GM12878 (cell line): ENCODE measurements at regions of chr9 and their contacts with region 1.

Region 1: GRCh38 chr9:105414947-105415661 is 32.7 kb upstream of the FSD1L start:
- DNase-seq: no peak
- ATAC-seq: peak; percentile 92
- H3K4me3 ChIP-seq: no peak overlapping the region
- H3K27ac ChIP-seq: no peak overlapping the region
- H3K4me1 ChIP-seq: peaks cover 9% of the 10 kb centered on the region
- H3K27me3 ChIP-seq: no peaks in the 10 kb centered on the region
- CTCF ChIP-seq: peak; percentile 79 to 91 (median 87)
- EP300 ChIP-seq: no peak
- POLR2A ChIP-seq: no peak
- RAD21 ChIP-seq: peak; percentile 98

Region 2: DNA sequence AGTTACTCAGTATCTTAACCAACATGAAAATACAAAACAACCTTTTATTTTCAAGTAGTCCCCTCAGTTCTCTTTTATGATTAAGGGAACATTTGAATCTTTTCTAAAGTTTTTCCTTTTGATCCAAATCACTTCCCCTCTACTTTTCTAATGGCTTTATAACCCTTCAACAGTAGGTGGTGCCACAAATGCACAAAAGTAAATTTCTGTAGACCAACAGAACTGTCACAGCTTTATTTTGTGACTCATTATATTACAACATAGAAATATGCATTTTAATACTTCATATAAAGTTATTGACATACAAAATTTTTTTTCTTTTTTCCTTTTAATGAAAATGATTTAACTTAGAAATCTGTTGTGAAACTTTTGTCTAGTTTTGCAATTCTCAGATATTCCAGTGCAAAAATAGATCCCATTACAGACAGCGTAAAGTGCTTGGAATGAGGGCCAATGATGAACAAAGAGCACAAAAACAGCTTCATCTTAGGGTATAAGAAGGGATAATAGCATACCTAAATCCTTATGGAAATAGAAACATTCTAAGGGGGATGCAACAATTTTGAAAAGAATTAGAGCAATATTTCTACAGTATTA is 634.2 kb before region 1 on chr9:
- CTCF ChIA-PET with region 1: interaction called, 7 read pairs
- POLR2A ChIA-PET with region 1: no interaction called
- RAD21 ChIA-PET with region 1: interaction called, 6 read pairs
- SMC1A ChIA-PET with region 1: interaction called, 10 read pairs
- in situ Hi-C with region 1: loop called (anchors 5 kb)
- intact Hi-C with region 1: loop called (anchors 2 kb)
- DNase-seq: no peak
- ATAC-seq: peak; percentile 62
- H3K4me3 ChIP-seq: no peak overlapping the region
- H3K27ac ChIP-seq: no peak overlapping the region
- H3K4me1 ChIP-seq: peaks cover 13% of the 10 kb centered on the region
- H3K27me3 ChIP-seq: no peaks in the 10 kb centered on the region
- CTCF ChIP-seq: peak; percentile 34 to 63 (median 50); a peak in 5 of 6 replicates
- EP300 ChIP-seq: no peak
- POLR2A ChIP-seq: no peak
- RAD21 ChIP-seq: peak; percentile 86

Region 3: GRCh38 chr9:104868687-104869404 is 546.3 kb before region 1 on chr9:
- CTCF ChIA-PET with region 1: interaction called, 66 read pairs
- POLR2A ChIA-PET with region 1: no interaction called
- RAD21 ChIA-PET with region 1: interaction called, 22 read pairs
- SMC1A ChIA-PET with region 1: interaction called, 7 read pairs
- in situ Hi-C with region 1: loop called (anchors 5 kb)
- intact Hi-C with region 1: no loop called
- DNase-seq: no peak
- ATAC-seq: peak; percentile 92
- H3K4me3 ChIP-seq: no peak overlapping the region
- H3K27ac ChIP-seq: no peak overlapping the region
- H3K4me1 ChIP-seq: peaks cover 6% of the 10 kb centered on the region
- H3K27me3 ChIP-seq: no peaks in the 10 kb centered on the region
- CTCF ChIP-seq: no peak
- EP300 ChIP-seq: no peak
- POLR2A ChIP-seq: no peak
- RAD21 ChIP-seq: no peak

Region 4: GRCh38 chr9:105157130-105157583 is 257.9 kb before region 1 on chr9:
- CTCF ChIA-PET with region 1: interaction called, 27 read pairs
- POLR2A ChIA-PET with region 1: no interaction called
- RAD21 ChIA-PET with region 1: interaction called, 10 read pairs
- SMC1A ChIA-PET with region 1: interaction called, 6 read pairs
- in situ Hi-C with region 1: loop called (anchors 5 kb)
- intact Hi-C with region 1: loop called (anchors 1 kb)
- DNase-seq: no peak
- ATAC-seq: peak; percentile 93
- H3K4me3 ChIP-seq: no peak overlapping the region
- H3K27ac ChIP-seq: no peak overlapping the region
- H3K4me1 ChIP-seq: no peaks in the 10 kb centered on the region
- H3K27me3 ChIP-seq: no peaks in the 10 kb centered on the region
- CTCF ChIP-seq: peak; percentile 27 to 54 (median 40); a peak in 4 of 6 replicates
- EP300 ChIP-seq: no peak
- POLR2A ChIP-seq: no peak
- RAD21 ChIP-seq: peak; percentile 63

Region 5: DNA sequence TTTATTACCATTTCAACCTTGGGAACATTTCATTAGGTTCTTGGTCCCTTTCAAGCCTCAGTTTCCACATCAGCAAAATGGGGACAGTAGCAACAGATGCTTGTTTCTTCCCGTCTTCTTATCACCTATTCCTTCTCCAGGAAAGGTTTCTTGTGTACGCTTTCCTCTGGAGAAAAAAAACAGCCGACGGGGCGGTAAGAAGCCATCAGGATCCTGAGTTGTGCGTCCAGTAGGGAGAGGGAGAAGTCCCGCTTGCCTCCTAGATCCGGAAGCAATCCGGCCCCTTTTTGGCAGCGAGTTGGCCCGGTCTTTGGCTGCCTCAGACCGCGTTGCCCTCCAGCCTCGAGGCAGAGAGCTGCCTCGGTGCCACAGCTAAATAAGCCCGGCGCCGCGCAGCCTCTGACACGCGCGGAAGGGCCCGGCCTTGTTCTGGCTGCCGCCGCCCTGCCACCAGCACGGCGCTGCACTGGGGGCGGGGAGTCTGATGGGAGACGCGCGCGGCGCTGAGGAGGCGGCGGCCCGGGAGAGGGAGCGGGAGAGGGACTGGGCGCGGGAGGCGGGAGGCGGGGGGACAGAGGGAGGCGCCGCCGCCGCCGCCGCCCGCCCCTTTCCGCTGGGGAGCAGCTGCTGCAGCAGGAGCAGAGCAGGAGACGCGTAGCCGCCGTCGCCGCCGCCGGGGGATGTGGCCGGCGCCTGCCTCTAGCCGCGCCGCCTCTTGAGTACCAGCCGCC is 170.9 kb before region 1 on chr9 and contains the start of gene SLC44A1:
- CTCF ChIA-PET with region 1: interaction called, 4 read pairs
- POLR2A ChIA-PET with region 1: no interaction called
- RAD21 ChIA-PET with region 1: interaction called, 9 read pairs
- SMC1A ChIA-PET with region 1: interaction called, 8 read pairs
- in situ Hi-C with region 1: no loop called
- intact Hi-C with region 1: loop called (anchors 5 kb)
- DNase-seq: peak; percentile 47
- ATAC-seq: peak; percentile 88
- H3K4me3 ChIP-seq: peak within 1 kb of the TSS; percentile 87
- H3K27ac ChIP-seq: peak within 1 kb of the TSS; percentile 10; the same call in 1 of the 2 replicates
- H3K4me1 ChIP-seq: peaks cover 11% of the 10 kb centered on the region
- H3K27me3 ChIP-seq: no peaks in the 10 kb centered on the region
- CTCF ChIP-seq: no peak
- EP300 ChIP-seq: no peak
- POLR2A ChIP-seq: peak; percentile 87
- RAD21 ChIP-seq: peak; percentile 24; the same call in 1 of the 2 replicates
- polyA plus RNA-seq, gene SLC44A1: 5.0 to 5.2 TPM